Activated CD8-positive, alpha-beta T cell treated with anti-CD3 and anti-CD28 coated beads for 36 hours (primary cell): ENCODE measurements at regions of chr3 and their contacts with region 1.

Region 1: DNA sequence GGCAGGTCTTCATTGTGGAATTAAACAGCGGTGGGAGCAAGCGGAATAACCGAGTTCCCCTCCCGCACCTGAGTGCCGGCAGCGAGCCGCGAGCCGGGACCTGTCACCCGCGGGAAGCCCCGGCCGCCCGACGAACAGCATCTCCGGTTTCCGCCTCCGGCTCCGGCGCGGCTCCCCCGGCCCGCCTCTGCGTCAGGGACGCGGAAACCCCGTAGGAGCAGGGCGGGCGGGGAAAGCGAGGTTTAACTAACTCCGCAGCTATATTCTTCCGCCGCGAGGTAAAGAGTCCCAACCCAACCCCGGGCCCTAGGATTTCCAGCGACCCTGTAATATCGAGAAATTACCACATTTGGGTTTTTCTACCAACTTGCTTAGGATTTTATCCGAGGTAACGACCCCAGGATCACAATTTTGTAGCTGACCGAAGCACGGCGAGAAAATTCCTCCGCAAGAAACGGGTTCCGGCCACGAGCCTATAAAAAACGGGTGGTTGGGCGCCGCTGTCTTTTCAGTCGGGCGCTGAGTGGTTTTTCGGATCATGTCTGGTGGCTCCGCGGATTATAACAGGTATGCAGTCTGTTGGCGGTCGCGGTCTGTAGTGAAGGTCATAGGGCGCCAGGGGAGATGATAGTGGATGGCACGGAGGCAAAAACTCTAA is at the start of gene EIF4A2:
- DNase-seq: peak; percentile 91
- ATAC-seq: peak; percentile 78
- H3K4me3 Mint-ChIP-seq: peak within 1 kb of the TSS; percentile 97
- H3K27ac Mint-ChIP-seq: peak within 1 kb of the TSS; percentile 99
- H3K4me1 Mint-ChIP-seq: peaks cover 30% of the 10 kb centered on the region
- H3K27me3 Mint-ChIP-seq: no peaks in the 10 kb centered on the region
- CTCF ChIP-seq: no peak
- total RNA-seq, gene EIF4A2: 450 to 466 TPM

Region 2: GRCh38 chr3:185937689-185938463 is 845.3 kb before region 1 on chr3 and contains the start of gene TRA2B:
- CTCF ChIA-PET with region 1: interaction called, 3 read pairs
- POLR2A ChIA-PET with region 1: interaction called, 85 read pairs
- intact Hi-C with region 1: loop called (anchors 5 kb)
- DNase-seq: peak; percentile 99
- ATAC-seq: peak; percentile 94
- H3K4me3 Mint-ChIP-seq: peak within 1 kb of the TSS; percentile 100
- H3K27ac Mint-ChIP-seq: peak within 1 kb of the TSS; percentile 100
- H3K4me1 Mint-ChIP-seq: peaks cover 19% of the 10 kb centered on the region
- H3K27me3 Mint-ChIP-seq: peaks cover 3% of the 10 kb centered on the region
- CTCF ChIP-seq: peak; percentile 27
- total RNA-seq, gene TRA2B: 210 to 219 TPM

Region 3: DNA sequence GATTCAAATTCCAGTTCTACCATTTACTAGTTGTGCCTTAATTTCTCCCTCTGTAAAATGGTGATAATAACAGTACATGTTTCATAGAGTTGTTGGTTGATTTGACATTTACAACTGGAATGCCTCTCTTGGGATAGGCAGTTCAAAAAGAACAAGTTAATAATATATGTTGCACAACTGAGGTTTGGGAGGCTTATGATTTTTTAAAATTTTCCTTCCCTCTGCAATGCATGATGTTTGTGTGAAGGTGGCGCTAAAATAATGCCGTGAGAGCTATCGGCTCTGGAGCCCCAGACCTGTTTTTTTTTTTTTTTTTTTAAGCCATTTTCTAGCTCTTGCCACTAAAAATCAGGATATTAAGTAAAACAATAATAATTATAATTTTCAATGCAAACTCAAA is 194.1 kb before region 1 on chr3:
- CTCF ChIA-PET with region 1: no interaction called
- POLR2A ChIA-PET with region 1: interaction called, 11 read pairs
- intact Hi-C with region 1: no loop called
- DNase-seq: no peak
- ATAC-seq: no peak
- H3K4me3 Mint-ChIP-seq: no peak overlapping the region
- H3K27ac Mint-ChIP-seq: no peak overlapping the region
- H3K4me1 Mint-ChIP-seq: peaks cover 20% of the 10 kb centered on the region
- H3K27me3 Mint-ChIP-seq: no peaks in the 10 kb centered on the region
- CTCF ChIP-seq: peak; percentile 19

Region 4: GRCh38 chr3:186732169-186732766 is 50.9 kb before region 1 on chr3:
- CTCF ChIA-PET with region 1: no interaction called
- POLR2A ChIA-PET with region 1: no interaction called
- intact Hi-C with region 1: no loop called
- DNase-seq: peak; percentile 52
- ATAC-seq: peak; percentile 64
- H3K4me3 Mint-ChIP-seq: no peak overlapping the region
- H3K27ac Mint-ChIP-seq: peak overlapping the region; percentile 17
- H3K4me1 Mint-ChIP-seq: peaks cover 11% of the 10 kb centered on the region
- H3K27me3 Mint-ChIP-seq: no peaks in the 10 kb centered on the region
- CTCF ChIP-seq: no peak

Region 5: DNA sequence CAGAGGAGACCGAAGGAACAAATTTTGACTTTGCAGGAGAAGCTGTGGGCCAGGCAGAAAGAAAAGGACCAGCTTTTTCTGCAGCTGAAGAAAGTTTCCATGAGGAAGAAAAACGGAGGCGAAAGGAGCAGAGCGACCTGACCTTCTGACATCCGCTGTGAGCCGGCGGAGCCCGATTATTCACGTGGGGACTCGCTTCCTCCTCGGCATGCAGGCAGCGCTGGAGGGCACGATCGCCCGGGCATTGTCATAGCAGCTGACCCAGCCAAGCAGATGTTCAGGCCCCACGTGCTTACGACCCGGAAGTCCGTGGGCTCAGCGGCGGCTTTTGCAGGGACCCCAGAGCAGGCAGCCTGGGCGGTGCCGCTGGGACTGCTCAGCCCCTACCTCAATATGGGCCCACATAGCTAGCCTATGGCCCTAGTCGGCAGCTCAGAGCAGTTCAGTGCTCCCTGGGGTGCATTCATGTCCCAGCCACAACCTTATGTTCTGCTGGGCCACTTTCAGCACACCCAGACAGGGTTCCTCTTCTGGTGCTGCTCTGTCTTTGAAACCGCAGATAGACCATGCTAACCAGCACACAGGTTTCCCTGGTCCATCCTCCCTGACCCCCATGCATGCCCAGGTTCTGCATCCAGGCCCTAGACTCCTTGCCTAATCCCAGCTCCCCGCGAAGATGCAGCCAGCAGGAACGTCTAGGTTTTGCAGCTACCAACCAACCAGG is 10.3 kb before region 1 on chr3:
- CTCF ChIA-PET with region 1: interaction called, 5 read pairs
- POLR2A ChIA-PET with region 1: interaction called, 206 read pairs
- intact Hi-C with region 1: no loop called
- DNase-seq: peak; percentile 91
- ATAC-seq: peak; percentile 94
- H3K4me3 Mint-ChIP-seq: peak overlapping the region; percentile 84
- H3K27ac Mint-ChIP-seq: peak overlapping the region; percentile 95
- H3K4me1 Mint-ChIP-seq: peaks cover 8% of the 10 kb centered on the region
- H3K27me3 Mint-ChIP-seq: no peaks in the 10 kb centered on the region
- CTCF ChIP-seq: no peak

Region 6: GRCh38 chr3:186806089-186807055 is 23.2 kb after region 1 on chr3 and contains the start of gene RFC4:
- CTCF ChIA-PET with region 1: interaction called, 4 read pairs
- POLR2A ChIA-PET with region 1: interaction called, 178 read pairs
- intact Hi-C with region 1: no loop called
- DNase-seq: peak; percentile 88
- ATAC-seq: peak; percentile 82
- H3K4me3 Mint-ChIP-seq: peak within 1 kb of the TSS; percentile 95
- H3K27ac Mint-ChIP-seq: peak within 1 kb of the TSS; percentile 96
- H3K4me1 Mint-ChIP-seq: peaks cover 25% of the 10 kb centered on the region
- H3K27me3 Mint-ChIP-seq: no peaks in the 10 kb centered on the region
- CTCF ChIP-seq: no peak
- total RNA-seq, gene RFC4: 110 to 125 TPM

Region 7: DNA sequence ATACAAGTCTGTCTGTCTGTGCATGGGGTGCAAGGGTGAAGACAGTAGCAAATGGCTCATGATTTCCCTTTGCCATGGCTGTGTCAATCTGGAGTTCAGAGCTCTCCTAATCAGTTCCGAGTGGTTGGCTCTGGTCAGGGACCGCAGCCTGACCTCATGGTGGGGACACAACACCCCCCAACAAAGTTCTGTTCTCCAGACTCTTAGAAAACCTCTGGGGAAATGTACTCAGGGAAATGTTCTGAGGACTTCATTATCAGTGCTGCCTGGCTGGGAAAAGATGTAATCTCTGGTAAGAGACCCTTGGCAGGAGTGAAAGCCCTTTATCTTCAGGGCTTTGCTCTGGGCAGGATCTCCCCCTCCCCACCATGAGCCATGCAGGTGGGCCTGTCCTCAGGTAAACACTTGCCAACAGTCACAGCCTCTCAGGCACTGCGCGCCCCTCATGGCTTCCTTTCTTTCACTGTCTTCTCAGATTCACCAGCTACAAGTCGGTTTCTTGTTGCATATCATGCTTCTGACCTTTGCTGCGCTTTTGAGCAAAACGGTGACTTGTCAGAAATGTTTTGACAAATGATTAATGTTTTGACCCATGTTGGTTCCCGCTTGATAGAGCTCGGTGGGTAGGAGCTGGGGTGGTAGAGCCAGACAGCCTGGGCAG is 242.6 kb after region 1 on chr3:
- CTCF ChIA-PET with region 1: no interaction called
- POLR2A ChIA-PET with region 1: interaction called, 33 read pairs
- intact Hi-C with region 1: no loop called
- DNase-seq: peak; percentile 68
- ATAC-seq: peak; percentile 38
- H3K4me3 Mint-ChIP-seq: peak overlapping the region; percentile 84
- H3K27ac Mint-ChIP-seq: peak overlapping the region; percentile 98
- H3K4me1 Mint-ChIP-seq: peaks cover 46% of the 10 kb centered on the region
- H3K27me3 Mint-ChIP-seq: no peaks in the 10 kb centered on the region
- CTCF ChIP-seq: no peak